ENCODE measurements at regions of chr7 and their contacts with region 1.

Region 1: DNA sequence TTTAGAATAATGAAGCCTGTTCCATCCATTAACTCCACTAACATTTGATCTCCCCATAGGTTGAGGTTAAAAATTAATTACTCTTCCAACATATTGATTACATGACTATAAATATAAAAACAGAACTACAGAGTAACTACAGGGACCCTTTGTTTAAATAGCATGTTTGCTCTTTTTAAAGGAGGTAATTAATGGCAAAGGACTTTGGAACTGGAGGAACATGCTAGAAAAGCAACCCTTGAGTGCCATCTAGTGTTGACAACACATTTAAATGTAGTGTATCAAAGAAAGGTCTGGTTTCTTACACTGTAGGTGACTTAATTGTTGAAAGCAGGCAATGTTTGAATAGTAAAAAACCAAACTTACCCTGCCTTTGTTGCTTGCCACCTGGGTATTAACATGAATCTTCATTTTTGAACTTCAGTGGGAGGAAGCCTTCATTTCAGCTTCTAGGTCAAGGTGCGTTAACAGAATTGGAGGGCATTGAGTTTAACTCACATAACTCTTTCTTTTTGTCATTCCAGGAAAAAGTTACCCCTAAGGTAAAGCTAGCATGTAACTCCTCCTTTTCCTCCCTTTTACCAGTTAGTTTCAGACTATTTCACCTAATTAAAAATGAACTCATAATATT is 52.6 kb upstream of the CAPZA2 start:
- DNase-seq: peak; percentile 47
- H3K4me3 ChIP-seq: no peak overlapping the region
- H3K27ac ChIP-seq: no peak overlapping the region
- H3K4me1 ChIP-seq: no peaks in the 10 kb centered on the region; a peak in 2 of 4 replicates
- H3K27me3 ChIP-seq: peaks cover 42% of the 10 kb centered on the region; the same call in 1 of the 2 replicates
- CTCF ChIP-seq: peak; percentile 91
- EP300 ChIP-seq: no peak
- RAD21 ChIP-seq: peak; percentile 94

Region 2: DNA sequence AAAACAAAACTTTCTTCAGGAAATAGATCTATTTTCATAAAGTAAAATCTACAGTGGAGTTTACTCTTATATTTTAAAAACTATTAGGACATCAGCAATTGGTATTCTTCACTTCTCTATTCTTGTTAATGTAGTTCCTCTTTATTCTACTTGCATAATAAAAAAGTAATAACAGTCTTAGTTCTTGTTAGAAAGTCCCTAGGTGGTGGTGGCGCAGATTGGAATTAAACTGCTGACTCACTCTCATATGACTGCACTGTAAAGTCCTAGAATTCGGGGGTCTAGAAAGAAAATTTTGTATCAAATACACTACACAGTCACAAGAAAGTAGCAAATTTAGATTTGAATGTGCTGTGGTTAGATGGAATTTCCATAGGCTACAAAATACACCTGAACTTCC is 644.0 kb before region 1 on chr7:
- CTCF ChIA-PET with region 1: interaction called, 10 read pairs
- POLR2A ChIA-PET with region 1: no interaction called
- DNase-seq: no peak
- H3K4me3 ChIP-seq: no peak overlapping the region
- H3K27ac ChIP-seq: no peak overlapping the region
- H3K4me1 ChIP-seq: no peaks in the 10 kb centered on the region
- H3K27me3 ChIP-seq: peaks cover 72% of the 10 kb centered on the region
- CTCF ChIP-seq: no peak
- EP300 ChIP-seq: no peak
- RAD21 ChIP-seq: no peak

Measured in SK-N-SH (cell line).